ENCODE measurements at regions of chr5 and their contacts with region 1.

Region 1: GRCh38 chr5:126600631-126601511 is at the start of gene PHAX:
- DNase-seq: peak; percentile 72
- H3K4me3 Mint-ChIP-seq: peak within 1 kb of the TSS; percentile 95
- H3K27ac Mint-ChIP-seq: peak within 1 kb of the TSS; percentile 97
- H3K4me1 Mint-ChIP-seq: peaks cover 33% of the 10 kb centered on the region
- H3K27me3 Mint-ChIP-seq: peaks cover 10% of the 10 kb centered on the region
- total RNA-seq, gene PHAX: 46.6 and 52.9 TPM in 2 replicates

Region 2: DNA sequence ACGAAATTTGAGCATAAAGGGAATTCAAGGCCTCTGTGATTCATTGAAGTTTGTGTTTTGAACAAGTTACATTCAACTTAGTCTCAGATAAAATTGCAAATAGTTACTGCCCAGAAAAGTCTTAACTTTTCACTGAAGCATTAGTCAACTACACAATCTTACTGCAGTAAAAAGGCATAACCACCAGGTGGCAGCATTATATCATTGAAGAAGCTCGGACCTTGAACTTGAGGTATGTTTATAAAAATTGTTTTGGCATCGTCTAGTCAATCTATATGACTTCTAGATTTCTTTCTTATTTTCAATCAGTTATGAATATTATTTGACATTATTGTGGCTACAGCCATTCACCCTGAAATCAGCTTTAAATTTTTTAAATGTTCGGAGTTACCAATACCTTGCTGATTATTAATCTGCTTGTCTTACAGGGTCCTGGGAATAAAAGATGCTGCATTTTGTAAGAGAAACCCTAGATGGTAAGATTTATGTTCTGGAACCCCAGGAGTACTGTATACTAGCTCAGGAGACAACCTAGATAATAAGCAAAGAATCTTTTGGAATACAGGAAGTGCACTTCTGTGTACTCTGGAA is 261.6 kb before region 1 on chr5:
- intact Hi-C with region 1: loop called (anchors 1 kb)
- DNase-seq: peak; percentile 20
- H3K4me3 Mint-ChIP-seq: no peak overlapping the region
- H3K27ac Mint-ChIP-seq: no peak overlapping the region
- H3K4me1 Mint-ChIP-seq: no peaks in the 10 kb centered on the region
- H3K27me3 Mint-ChIP-seq: peaks cover 9% of the 10 kb centered on the region

Region 3: GRCh38 chr5:126449751-126450271 is 151.1 kb before region 1 on chr5:
- intact Hi-C with region 1: loop called (anchors 5 kb)
- DNase-seq: peak; percentile 60
- H3K4me3 Mint-ChIP-seq: peak overlapping the region; percentile 85
- H3K27ac Mint-ChIP-seq: peak overlapping the region; percentile 100
- H3K4me1 Mint-ChIP-seq: peaks cover 67% of the 10 kb centered on the region
- H3K27me3 Mint-ChIP-seq: no peaks in the 10 kb centered on the region

Region 4: GRCh38 chr5:126811515-126812198 is 210.8 kb after region 1 on chr5:
- intact Hi-C with region 1: loop called (anchors 2 kb)
- DNase-seq: peak; percentile 50
- H3K4me3 Mint-ChIP-seq: peak overlapping the region; percentile 81
- H3K27ac Mint-ChIP-seq: peak overlapping the region; percentile 90
- H3K4me1 Mint-ChIP-seq: peaks cover 69% of the 10 kb centered on the region
- H3K27me3 Mint-ChIP-seq: no peaks in the 10 kb centered on the region

Region 5: GRCh38 chr5:127030259-127031146 is 429.6 kb after region 1 on chr5 and contains the start of gene MARCHF3:
- intact Hi-C with region 1: loop called (anchors 1 kb)
- DNase-seq: peak; percentile 96
- H3K4me3 Mint-ChIP-seq: peak within 1 kb of the TSS; percentile 89
- H3K27ac Mint-ChIP-seq: peak within 1 kb of the TSS; percentile 69
- H3K4me1 Mint-ChIP-seq: peaks cover 30% of the 10 kb centered on the region
- H3K27me3 Mint-ChIP-seq: peaks cover 32% of the 10 kb centered on the region
- total RNA-seq, gene MARCHF3: 5.2 and 5.9 TPM in 2 replicates

Region 6: GRCh38 chr5:128083033-128083810 is 1482.4 kb after region 1 on chr5 and contains the start of gene SLC12A2:
- intact Hi-C with region 1: loop called (anchors 5 kb)
- DNase-seq: peak; percentile 87
- H3K4me3 Mint-ChIP-seq: peak within 1 kb of the TSS; percentile 93
- H3K27ac Mint-ChIP-seq: peak within 1 kb of the TSS; percentile 96
- H3K4me1 Mint-ChIP-seq: peaks cover 70% of the 10 kb centered on the region
- H3K27me3 Mint-ChIP-seq: no peaks in the 10 kb centered on the region
- total RNA-seq, gene SLC12A2: 23.9 and 24.8 TPM in 2 replicates